Endothelial cell of umbilical vein (primary cell): ENCODE measurements at regions of chr12 and their contacts with region 1.

Region 1: DNA sequence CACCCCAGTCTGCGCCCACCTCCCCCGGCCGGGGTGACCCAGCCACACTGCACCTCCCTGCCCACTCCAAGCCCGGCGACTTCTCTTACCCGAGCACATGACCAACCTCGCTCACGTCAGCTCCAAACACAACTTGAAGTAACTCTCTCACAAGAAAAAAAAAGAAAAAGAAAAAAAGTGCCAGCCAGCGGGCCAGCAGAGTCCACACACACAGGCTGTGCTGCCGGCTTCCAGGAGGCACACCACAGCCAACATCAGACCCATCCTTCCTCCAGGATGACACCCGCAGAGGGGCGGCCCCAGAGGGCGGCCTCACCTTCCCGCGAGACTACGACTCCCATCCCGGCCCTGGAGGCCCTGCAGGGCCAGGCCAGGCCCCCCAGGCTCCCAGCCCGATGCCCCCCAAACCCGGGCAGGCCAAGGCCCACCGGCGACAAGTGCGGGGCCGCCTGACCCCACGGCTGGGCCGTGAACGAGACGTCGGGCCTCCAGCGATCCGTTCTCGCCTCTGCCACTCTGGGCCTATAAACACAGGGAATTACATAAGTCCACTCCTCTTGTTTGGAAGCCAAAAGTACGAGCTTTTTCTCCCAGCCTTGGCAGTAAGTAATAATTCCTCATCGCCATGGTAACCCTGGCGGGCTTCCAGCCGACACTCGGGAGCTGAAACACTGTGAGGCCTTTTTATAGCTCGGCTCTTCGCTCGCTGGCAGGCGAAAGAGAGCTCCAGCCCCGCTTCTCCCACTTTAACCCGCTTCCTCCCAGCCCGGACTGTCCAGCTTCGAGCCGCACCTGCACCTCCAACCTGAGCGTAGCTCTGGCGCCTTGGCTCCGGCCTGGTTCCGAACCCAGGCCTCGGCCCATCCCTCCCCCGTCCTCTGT is 49.1 kb downstream of the NCOR2 start:
- DNase-seq: peak; percentile 99
- H3K4me3 ChIP-seq: peak overlapping the region in 1 of 3 experiments; percentile 19
- H3K27ac ChIP-seq: peak overlapping the region; percentile 91
- H3K4me1 ChIP-seq: peaks cover 64% of the 10 kb centered on the region
- H3K27me3 ChIP-seq: no peaks in the 10 kb centered on the region
- CTCF ChIP-seq: no peak
- POLR2A ChIP-seq: no peak

Region 2: DNA sequence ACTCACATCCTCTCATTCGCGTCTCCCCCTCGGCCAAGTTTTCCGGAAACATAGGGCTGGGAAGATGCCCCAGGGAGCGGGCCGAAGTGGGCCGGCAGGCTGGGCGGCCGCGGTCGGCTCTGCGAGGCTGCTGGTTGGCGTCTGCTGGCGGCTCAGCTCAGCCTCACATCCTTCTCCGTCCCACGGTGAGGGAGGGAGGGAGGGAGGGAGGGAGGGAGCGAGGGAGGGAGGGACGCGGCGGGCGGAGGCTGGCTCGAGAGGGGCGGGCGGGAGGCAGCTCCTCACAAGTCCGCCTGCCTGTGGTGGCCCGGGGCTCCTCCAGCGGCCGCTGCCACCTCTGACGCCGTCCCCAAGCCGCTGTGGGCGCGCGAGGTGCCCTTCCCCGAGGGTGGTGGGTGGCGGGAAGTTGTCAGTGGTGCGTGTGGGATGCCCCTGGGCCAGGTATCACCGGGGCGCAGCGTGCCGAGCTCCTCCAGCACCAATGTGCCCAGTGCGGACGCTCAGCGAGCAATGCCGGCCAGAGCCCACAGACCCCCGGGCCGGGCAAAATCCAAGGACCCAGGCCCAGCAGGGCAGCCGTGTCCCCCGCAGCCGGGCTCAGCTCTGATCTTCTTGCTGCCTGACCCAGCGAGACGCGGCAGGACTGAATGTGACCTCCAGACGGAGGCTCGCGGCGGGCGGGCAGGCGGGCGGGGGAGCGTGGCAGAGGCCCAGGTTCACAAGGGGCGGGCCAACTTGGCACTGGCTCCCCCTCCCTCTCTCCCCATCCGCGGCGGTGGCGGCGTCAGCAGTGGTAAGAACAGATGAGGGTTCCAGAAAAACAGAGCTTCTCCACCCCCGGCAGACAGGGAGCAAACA is 129.4 kb before region 1 on chr12:
- CTCF ChIA-PET with region 1: interaction called, 14 read pairs
- POLR2A ChIA-PET with region 1: interaction called, 3 read pairs
- dilution Hi-C with region 1: no loop called
- intact Hi-C with region 1: no loop called
- DNase-seq: peak; percentile 87
- H3K4me3 ChIP-seq: peak overlapping the region; percentile 42 to 83 (median 81)
- H3K27ac ChIP-seq: peak overlapping the region; percentile 92
- H3K4me1 ChIP-seq: peaks cover 84% of the 10 kb centered on the region
- H3K27me3 ChIP-seq: no peaks in the 10 kb centered on the region
- CTCF ChIP-seq: no peak
- POLR2A ChIP-seq: peak; percentile 66

Region 3: GRCh38 chr12:124453419-124454351 is 64.6 kb before region 1 on chr12:
- CTCF ChIA-PET with region 1: interaction called, 5 read pairs
- POLR2A ChIA-PET with region 1: no interaction called
- dilution Hi-C with region 1: no loop called
- intact Hi-C with region 1: loop called (anchors 2 kb)
- DNase-seq: peak; percentile 80
- H3K4me3 ChIP-seq: no peak overlapping the region
- H3K27ac ChIP-seq: peak overlapping the region; percentile 81
- H3K4me1 ChIP-seq: peaks cover 29% of the 10 kb centered on the region
- H3K27me3 ChIP-seq: no peaks in the 10 kb centered on the region
- CTCF ChIP-seq: no peak
- POLR2A ChIP-seq: no peak

Region 4: GRCh38 chr12:124551268-124552144 is 33.2 kb after region 1 on chr12:
- CTCF ChIA-PET with region 1: interaction called, 13 read pairs
- POLR2A ChIA-PET with region 1: no interaction called
- dilution Hi-C with region 1: no loop called
- intact Hi-C with region 1: no loop called
- DNase-seq: no peak
- H3K4me3 ChIP-seq: no peak overlapping the region
- H3K27ac ChIP-seq: no peak overlapping the region
- H3K4me1 ChIP-seq: peaks cover 32% of the 10 kb centered on the region
- H3K27me3 ChIP-seq: no peaks in the 10 kb centered on the region
- CTCF ChIP-seq: no peak
- POLR2A ChIP-seq: no peak

Region 5: DNA sequence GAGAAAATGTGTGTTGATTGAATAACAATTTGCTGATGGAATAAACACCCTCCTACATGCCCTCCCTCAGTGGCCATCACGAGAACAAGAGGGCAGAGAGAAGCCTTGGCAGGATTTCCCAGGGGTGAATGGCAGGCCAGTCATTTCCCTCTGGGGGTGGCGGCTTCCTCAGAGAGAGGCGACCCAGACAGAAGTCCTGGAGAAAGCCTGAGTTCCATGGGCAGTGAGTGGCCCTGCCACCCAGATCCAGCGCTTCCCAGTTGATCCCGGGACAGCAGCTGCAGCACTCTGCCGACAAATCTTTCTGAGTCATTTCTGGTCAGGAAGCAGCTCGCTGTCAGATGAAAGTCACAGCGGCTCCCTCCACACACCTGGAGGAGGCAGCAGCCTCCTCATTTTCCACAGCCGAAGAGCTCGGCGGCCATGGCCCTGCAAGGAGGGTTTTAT is 222.4 kb after region 1 on chr12:
- CTCF ChIA-PET with region 1: interaction called, 4 read pairs
- POLR2A ChIA-PET with region 1: interaction called, 4 read pairs
- dilution Hi-C with region 1: no loop called
- intact Hi-C with region 1: loop called (anchors 2 kb)
- DNase-seq: peak; percentile 87
- H3K4me3 ChIP-seq: no peak overlapping the region
- H3K27ac ChIP-seq: peak overlapping the region; percentile 88
- H3K4me1 ChIP-seq: peaks cover 42% of the 10 kb centered on the region
- H3K27me3 ChIP-seq: no peaks in the 10 kb centered on the region
- CTCF ChIP-seq: peak; percentile 7 to 13
- POLR2A ChIP-seq: no peak